GM12878 (cell line): ENCODE measurements at regions of chr9 and their contacts with region 1.

Region 1: DNA sequence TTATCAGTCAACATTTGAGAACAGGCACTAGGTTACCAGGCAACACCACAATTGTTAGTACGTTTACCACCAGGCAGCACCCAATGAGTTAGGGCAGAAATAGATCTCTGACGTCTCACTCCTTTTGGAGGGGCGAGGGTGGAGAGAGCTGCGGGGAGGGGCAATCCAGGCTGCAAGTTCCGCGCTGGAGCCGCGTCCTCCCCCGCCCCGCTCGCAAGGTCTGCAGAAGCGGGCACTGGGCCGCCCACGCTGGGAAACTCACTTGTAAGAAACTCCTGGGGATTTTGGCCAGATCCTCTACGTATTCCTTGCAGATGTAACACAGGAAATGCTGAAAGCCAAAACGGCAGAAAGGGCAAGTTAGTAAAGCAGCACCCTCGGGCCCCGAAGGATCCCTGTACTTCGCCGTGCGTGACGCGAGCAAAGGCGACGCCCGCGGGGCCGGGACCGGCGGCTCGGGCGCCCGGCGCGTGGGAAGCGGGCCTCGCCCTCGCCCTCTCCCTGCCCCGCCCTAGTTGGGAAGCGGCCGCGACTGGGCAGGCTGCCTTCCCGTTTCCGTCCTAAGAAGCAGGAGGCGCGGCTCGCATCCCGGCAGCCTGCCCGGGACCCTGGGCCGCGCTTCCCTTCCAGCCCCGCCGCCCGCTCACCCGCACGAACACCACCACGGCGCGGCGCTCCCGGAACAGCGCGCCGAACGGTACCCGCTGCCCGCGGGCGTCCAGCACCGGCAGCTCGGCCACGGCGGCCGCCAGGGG is 497 bp downstream of the PRXL2C start:
- DNase-seq: no peak
- ATAC-seq: peak; percentile 84
- H3K4me3 ChIP-seq: peak overlapping the region; percentile 62
- H3K27ac ChIP-seq: no peak overlapping the region; the same call in 1 of the 2 replicates
- H3K4me1 ChIP-seq: no peaks in the 10 kb centered on the region
- H3K27me3 ChIP-seq: peaks cover 0 to 4% of the 10 kb centered on the region in 2 experiments; a peak in 1 of 4 replicates
- CTCF ChIP-seq: peak in 1 of 3 experiments; percentile 11; a peak in 1 of 6 replicates
- EP300 ChIP-seq: no peak
- POLR2A ChIP-seq: no peak
- RAD21 ChIP-seq: no peak

Region 2: DNA sequence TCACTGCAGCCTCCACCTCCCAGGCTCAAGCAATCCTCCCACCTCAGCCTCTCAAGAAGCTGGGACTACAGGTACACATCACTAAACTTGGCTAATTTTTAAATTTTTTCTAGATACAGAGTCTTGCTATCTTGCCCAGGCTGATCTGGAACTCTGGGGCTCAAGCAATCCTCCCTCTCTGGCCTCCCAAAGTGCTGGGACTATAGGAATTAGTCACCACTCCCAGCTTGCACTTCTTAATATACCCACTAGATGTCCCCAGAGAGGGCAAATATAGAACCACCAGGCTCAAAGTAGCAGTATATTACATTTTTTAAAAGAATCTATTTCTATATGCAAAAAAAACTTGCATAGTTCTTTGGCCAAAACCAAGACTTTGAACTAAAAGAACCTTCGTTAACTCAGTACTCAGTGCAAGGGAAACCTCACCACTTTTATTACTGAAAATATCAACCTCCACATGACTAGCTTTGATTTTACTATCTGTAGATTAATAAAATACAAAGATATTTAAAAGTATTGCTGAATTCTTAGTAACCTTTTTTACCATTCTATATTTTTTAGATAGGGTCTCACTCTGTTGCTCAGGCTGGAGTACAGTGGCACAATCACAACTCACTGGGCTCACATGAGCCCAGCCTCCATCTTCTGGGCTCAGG is 326.8 kb before region 1 on chr9:
- CTCF ChIA-PET with region 1: interaction called, 31 read pairs
- POLR2A ChIA-PET with region 1: no interaction called
- RAD21 ChIA-PET with region 1: interaction called, 5 read pairs
- SMC1A ChIA-PET with region 1: interaction called, 13 read pairs
- in situ Hi-C with region 1: loop called (anchors 5 kb)
- intact Hi-C with region 1: loop called (anchors 5 kb)
- DNase-seq: peak; percentile 8
- ATAC-seq: peak; percentile 85
- H3K4me3 ChIP-seq: no peak overlapping the region
- H3K27ac ChIP-seq: no peak overlapping the region
- H3K4me1 ChIP-seq: no peaks in the 10 kb centered on the region
- H3K27me3 ChIP-seq: no peaks in the 10 kb centered on the region
- CTCF ChIP-seq: peak; percentile 71 to 75 (median 75)
- EP300 ChIP-seq: no peak
- POLR2A ChIP-seq: no peak
- RAD21 ChIP-seq: peak; percentile 77

Region 3: DNA sequence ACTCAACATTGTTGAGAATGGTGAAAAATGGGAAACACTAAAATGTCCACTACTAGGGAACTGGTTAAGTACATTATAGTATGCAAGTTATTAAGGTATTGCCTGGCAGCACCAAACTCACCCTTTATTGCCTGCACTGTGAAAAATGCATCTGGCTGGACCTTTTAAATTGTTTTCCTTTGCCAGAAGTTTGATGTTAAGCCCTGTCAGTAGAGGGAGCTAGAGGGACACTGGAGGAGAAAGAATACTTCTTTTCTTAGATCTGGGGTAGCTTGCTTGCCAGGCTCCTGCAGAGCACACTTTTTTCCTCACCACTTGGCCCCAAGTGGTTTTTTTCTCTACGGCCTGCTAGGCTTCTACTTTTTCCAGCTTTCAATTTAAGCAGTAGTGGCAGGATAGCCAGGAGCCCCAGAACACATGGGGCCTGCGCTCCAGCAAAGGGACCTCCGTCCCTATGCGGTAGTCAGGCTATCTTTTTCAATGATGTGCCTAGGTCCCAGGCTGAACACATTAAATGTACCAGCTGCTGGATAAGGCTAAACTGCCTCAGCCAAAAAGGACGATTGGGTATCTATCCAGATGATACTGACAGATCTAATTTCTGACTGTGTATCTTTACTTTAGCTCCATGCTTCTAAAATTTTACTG is 212.7 kb before region 1 on chr9:
- CTCF ChIA-PET with region 1: interaction called, 27 read pairs
- POLR2A ChIA-PET with region 1: no interaction called
- RAD21 ChIA-PET with region 1: interaction called, 3 read pairs
- SMC1A ChIA-PET with region 1: interaction called, 14 read pairs
- in situ Hi-C with region 1: loop called (anchors 5 kb)
- intact Hi-C with region 1: loop called (anchors 2 kb)
- DNase-seq: no peak
- ATAC-seq: peak; percentile 85
- H3K4me3 ChIP-seq: no peak overlapping the region
- H3K27ac ChIP-seq: no peak overlapping the region
- H3K4me1 ChIP-seq: no peaks in the 10 kb centered on the region
- H3K27me3 ChIP-seq: no peaks in the 10 kb centered on the region
- CTCF ChIP-seq: peak; percentile 68 to 72 (median 71)
- EP300 ChIP-seq: no peak
- POLR2A ChIP-seq: no peak
- RAD21 ChIP-seq: peak; percentile 84

Region 4: GRCh38 chr9:96449845-96450612 is 204.6 kb before region 1 on chr9 and contains the start of gene HABP4:
- CTCF ChIA-PET with region 1: interaction called, 3 read pairs
- POLR2A ChIA-PET with region 1: interaction called, 3 read pairs
- RAD21 ChIA-PET with region 1: interaction called, 9 read pairs
- SMC1A ChIA-PET with region 1: interaction called, 3 read pairs
- in situ Hi-C with region 1: loop called (anchors 5 kb)
- intact Hi-C with region 1: no loop called
- DNase-seq: peak; percentile 48
- ATAC-seq: peak; percentile 99
- H3K4me3 ChIP-seq: peak within 1 kb of the TSS; percentile 68
- H3K27ac ChIP-seq: no peak within 1 kb of the TSS
- H3K4me1 ChIP-seq: peaks cover 6% of the 10 kb centered on the region
- H3K27me3 ChIP-seq: peaks cover 0 to 3% of the 10 kb centered on the region in 2 experiments; a peak in 1 of 4 replicates
- CTCF ChIP-seq: no peak
- EP300 ChIP-seq: no peak
- POLR2A ChIP-seq: peak; percentile 78
- RAD21 ChIP-seq: no peak
- polyA plus RNA-seq, gene HABP4: 4.4 to 5.7 TPM

Region 5: GRCh38 chr9:96540106-96540505 is 114.5 kb before region 1 on chr9:
- CTCF ChIA-PET with region 1: no interaction called
- POLR2A ChIA-PET with region 1: no interaction called
- RAD21 ChIA-PET with region 1: no interaction called
- SMC1A ChIA-PET with region 1: no interaction called
- in situ Hi-C with region 1: no loop called
- intact Hi-C with region 1: no loop called
- DNase-seq: no peak
- ATAC-seq: no peak
- H3K4me3 ChIP-seq: no peak overlapping the region
- H3K27ac ChIP-seq: no peak overlapping the region
- H3K4me1 ChIP-seq: no peaks in the 10 kb centered on the region
- H3K27me3 ChIP-seq: no peaks in the 10 kb centered on the region
- CTCF ChIP-seq: no peak
- EP300 ChIP-seq: no peak
- POLR2A ChIP-seq: no peak
- RAD21 ChIP-seq: no peak

Region 6: DNA sequence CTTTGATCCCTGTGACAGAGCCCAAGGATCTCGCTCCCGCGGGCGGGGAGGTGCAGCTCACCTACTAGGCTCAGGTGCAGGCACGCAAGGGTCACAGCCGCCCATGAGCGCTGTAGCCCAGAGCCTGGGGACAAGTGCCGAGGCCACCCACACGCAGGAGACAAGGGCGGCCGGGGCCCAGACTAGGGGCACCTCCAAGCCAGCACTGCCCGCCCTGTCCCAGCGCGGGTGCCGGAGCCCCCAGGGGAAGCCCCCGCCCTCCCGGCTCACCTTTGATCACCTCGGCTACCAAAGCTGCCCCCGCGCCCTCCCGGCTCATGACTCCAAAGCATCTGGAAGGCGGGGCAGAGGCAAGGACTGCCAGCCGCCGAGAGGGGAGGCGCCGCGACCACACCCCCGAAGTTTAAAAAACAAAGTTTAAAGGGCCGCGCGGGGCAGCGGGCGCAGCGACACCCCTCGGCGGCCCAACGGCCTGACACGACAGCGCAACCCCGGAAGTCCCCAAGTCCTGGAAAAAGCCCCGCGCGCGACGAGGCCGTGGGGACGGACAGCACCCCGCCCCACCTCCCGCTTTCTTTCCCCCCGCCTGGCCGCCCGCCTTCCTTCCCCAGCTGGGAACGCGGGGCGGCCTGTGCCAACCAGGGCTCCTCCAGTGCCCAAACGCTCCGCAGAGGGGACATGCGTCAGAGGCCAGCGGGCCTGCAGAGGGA is 88.0 kb before region 1 on chr9:
- CTCF ChIA-PET with region 1: interaction called, 3 read pairs
- POLR2A ChIA-PET with region 1: interaction called, 3 read pairs
- RAD21 ChIA-PET with region 1: no interaction called
- SMC1A ChIA-PET with region 1: interaction called, 3 read pairs
- in situ Hi-C with region 1: no loop called
- intact Hi-C with region 1: loop called (anchors 5 kb)
- DNase-seq: no peak
- ATAC-seq: peak; percentile 91
- H3K4me3 ChIP-seq: peak overlapping the region; percentile 80
- H3K27ac ChIP-seq: peak overlapping the region; percentile 46
- H3K4me1 ChIP-seq: peaks cover 3% of the 10 kb centered on the region
- H3K27me3 ChIP-seq: no peaks in the 10 kb centered on the region
- CTCF ChIP-seq: peak; percentile 63 to 77 (median 75)
- EP300 ChIP-seq: no peak
- POLR2A ChIP-seq: peak; percentile 81
- RAD21 ChIP-seq: peak; percentile 57

Region 7: DNA sequence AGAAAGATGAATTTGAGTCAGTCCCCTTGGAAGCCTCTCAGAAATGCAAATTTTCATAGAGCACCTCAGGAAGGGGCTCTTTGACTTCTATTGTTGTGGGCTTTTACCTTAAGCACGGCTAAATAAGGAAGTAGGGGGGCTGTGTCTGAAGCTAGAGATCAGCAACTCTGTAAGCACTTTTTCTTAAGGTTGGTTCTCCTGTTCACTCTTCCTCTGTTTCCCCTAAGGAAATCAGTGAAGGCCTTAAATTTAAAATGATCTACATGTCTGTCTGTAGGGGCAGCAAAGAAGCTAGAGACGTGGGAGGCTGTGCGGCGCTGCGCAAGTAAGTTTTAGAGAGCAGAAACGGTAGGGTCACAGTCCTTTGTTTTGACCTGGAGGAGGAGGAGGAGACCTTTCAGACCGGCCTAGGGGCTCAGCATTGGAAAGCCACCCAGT is 33.8 kb before region 1 on chr9:
- CTCF ChIA-PET with region 1: no interaction called
- POLR2A ChIA-PET with region 1: no interaction called
- RAD21 ChIA-PET with region 1: no interaction called
- SMC1A ChIA-PET with region 1: no interaction called
- in situ Hi-C with region 1: no loop called
- intact Hi-C with region 1: no loop called
- DNase-seq: no peak
- ATAC-seq: no peak
- H3K4me3 ChIP-seq: no peak overlapping the region
- H3K27ac ChIP-seq: no peak overlapping the region
- H3K4me1 ChIP-seq: no peaks in the 10 kb centered on the region
- H3K27me3 ChIP-seq: peaks cover 0 to 17% of the 10 kb centered on the region in 2 experiments; a peak in 2 of 4 replicates
- CTCF ChIP-seq: no peak
- EP300 ChIP-seq: no peak
- POLR2A ChIP-seq: no peak
- RAD21 ChIP-seq: no peak

Region 8: DNA sequence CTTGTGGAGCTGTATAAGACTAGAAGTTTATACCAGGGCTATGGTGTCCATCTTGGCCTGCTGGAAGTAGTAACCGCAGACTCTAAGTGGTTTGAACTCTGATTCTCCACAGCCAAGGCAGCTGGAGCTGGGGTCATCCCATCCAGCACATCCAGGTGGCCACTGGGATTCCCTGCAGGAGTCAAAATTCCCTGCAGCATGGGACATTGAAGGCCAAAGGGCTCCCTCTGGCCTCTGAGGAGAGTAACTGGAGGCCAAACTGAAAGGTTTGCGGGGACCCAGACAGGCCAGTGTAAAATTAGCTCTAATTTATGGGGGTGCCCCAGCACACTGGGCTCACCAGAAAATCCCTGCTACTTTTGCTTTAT is 12.7 kb after region 1 on chr9:
- CTCF ChIA-PET with region 1: interaction called, 12 read pairs
- POLR2A ChIA-PET with region 1: no interaction called
- RAD21 ChIA-PET with region 1: interaction called, 5 read pairs
- SMC1A ChIA-PET with region 1: interaction called, 17 read pairs
- in situ Hi-C with region 1: no loop called
- intact Hi-C with region 1: no loop called
- DNase-seq: no peak
- ATAC-seq: no peak; the same call in 2 of the 3 replicates
- H3K4me3 ChIP-seq: no peak overlapping the region
- H3K27ac ChIP-seq: no peak overlapping the region
- H3K4me1 ChIP-seq: no peaks in the 10 kb centered on the region
- H3K27me3 ChIP-seq: no peaks in the 10 kb centered on the region
- CTCF ChIP-seq: no peak
- EP300 ChIP-seq: no peak
- POLR2A ChIP-seq: no peak
- RAD21 ChIP-seq: no peak

Region 9: GRCh38 chr9:97307091-97307490 is 652.5 kb after region 1 on chr9:
- CTCF ChIA-PET with region 1: no interaction called
- POLR2A ChIA-PET with region 1: no interaction called
- RAD21 ChIA-PET with region 1: no interaction called
- SMC1A ChIA-PET with region 1: no interaction called
- in situ Hi-C with region 1: no loop called
- intact Hi-C with region 1: no loop called
- DNase-seq: no peak
- ATAC-seq: no peak
- H3K4me3 ChIP-seq: no peak overlapping the region
- H3K27ac ChIP-seq: no peak overlapping the region
- H3K4me1 ChIP-seq: no peaks in the 10 kb centered on the region
- H3K27me3 ChIP-seq: no peaks in the 10 kb centered on the region; a peak in 1 of 4 replicates
- CTCF ChIP-seq: no peak
- EP300 ChIP-seq: no peak
- POLR2A ChIP-seq: no peak
- RAD21 ChIP-seq: no peak